Activated CD4-positive, alpha-beta T cell treated with anti-CD3 and anti-CD28 coated beads for 36 hours (primary cell): ENCODE measurements at regions of chr3 and their contacts with region 1.

Region 1: DNA sequence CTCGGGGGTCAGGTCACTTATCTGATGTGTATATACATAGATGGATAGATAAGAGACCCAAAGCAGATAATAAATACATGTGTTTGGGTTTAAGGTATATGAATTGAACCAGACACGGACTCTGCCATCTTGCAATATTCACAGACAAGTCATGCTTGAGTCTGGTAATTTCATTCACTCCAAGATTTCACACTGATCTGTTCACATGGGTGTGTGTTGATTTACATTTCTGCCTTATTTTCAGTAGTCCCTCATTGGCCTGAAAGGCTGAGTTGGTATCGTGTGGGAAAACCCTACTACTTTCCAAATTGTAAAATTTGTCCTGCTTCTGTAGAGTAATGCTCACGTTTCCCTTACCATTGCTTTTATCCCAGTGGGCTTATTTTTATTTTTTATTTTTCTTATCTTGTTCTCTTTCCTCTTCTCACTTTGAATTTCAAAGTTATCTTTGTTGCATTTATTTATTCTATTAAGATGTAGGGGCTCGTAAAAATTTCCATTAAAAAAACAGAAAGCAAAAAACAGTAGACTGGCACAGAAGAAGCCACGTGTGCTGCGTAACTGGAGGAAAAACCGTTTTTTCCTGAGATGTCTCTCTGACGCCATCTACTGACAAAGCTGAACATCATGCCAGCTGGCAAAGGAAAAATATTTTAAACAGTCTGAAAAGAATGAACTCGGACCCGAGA is 10.8 kb upstream of the MFSD1 start:
- DNase-seq: peak; percentile 48
- ATAC-seq: peak; percentile 74
- H3K4me3 Mint-ChIP-seq: peak overlapping the region; percentile 45
- H3K27ac Mint-ChIP-seq: peak overlapping the region; percentile 29
- H3K4me1 Mint-ChIP-seq: peaks cover 5% of the 10 kb centered on the region
- H3K27me3 Mint-ChIP-seq: no peaks in the 10 kb centered on the region

Region 2: GRCh38 chr3:157624801-157625200 is 1166.2 kb before region 1 on chr3:
- CTCF ChIA-PET with region 1: no interaction called
- POLR2A ChIA-PET with region 1: no interaction called
- intact Hi-C with region 1: loop called in 1 of 2 experiments (anchors 5 kb)
- DNase-seq: no peak
- ATAC-seq: no peak
- H3K4me3 Mint-ChIP-seq: no peak overlapping the region
- H3K27ac Mint-ChIP-seq: no peak overlapping the region
- H3K4me1 Mint-ChIP-seq: no peaks in the 10 kb centered on the region
- H3K27me3 Mint-ChIP-seq: peaks cover 14% of the 10 kb centered on the region

Region 3: GRCh38 chr3:158659454-158660237 is 131.4 kb before region 1 on chr3:
- CTCF ChIA-PET with region 1: interaction called, 28 read pairs
- POLR2A ChIA-PET with region 1: no interaction called
- intact Hi-C with region 1: loop called (anchors 1 kb)
- DNase-seq: peak; percentile 76
- ATAC-seq: peak; percentile 97
- H3K4me3 Mint-ChIP-seq: no peak overlapping the region
- H3K27ac Mint-ChIP-seq: no peak overlapping the region
- H3K4me1 Mint-ChIP-seq: peaks cover 11% of the 10 kb centered on the region
- H3K27me3 Mint-ChIP-seq: no peaks in the 10 kb centered on the region

Region 4: DNA sequence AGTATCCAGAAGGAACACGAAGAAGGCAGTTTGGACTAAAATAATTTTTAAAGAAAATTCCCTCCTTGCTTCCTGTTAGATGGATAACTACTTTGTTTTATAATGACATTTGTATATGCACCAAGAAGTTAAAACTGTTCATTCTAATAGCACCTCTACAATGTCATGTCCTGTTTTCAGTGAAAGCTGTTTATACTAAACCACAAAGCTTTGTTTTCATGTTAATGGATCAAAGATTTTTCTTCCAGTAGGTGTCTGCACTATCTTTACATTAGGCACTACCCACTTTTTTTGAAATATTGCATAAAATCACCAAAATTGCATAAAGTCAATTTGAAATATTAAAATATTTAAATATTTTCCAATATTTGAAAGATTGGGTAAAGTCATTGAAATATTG is 68.9 kb before region 1 on chr3:
- CTCF ChIA-PET with region 1: interaction called, 114 read pairs
- POLR2A ChIA-PET with region 1: no interaction called
- intact Hi-C with region 1: loop called (anchors 1 kb)
- DNase-seq: no peak
- ATAC-seq: no peak
- H3K4me3 Mint-ChIP-seq: no peak overlapping the region
- H3K27ac Mint-ChIP-seq: no peak overlapping the region
- H3K4me1 Mint-ChIP-seq: peaks cover 34% of the 10 kb centered on the region
- H3K27me3 Mint-ChIP-seq: no peaks in the 10 kb centered on the region

Region 5: GRCh38 chr3:158801696-158802408 is 10.8 kb after region 1 on chr3 and contains the start of gene MFSD1:
- CTCF ChIA-PET with region 1: interaction called, 13 read pairs
- POLR2A ChIA-PET with region 1: interaction called, 4 read pairs
- intact Hi-C with region 1: loop called in 1 of 2 experiments (anchors 1 kb)
- DNase-seq: peak; percentile 94
- ATAC-seq: peak; percentile 92
- H3K4me3 Mint-ChIP-seq: peak within 1 kb of the TSS; percentile 81
- H3K27ac Mint-ChIP-seq: peak within 1 kb of the TSS; percentile 87
- H3K4me1 Mint-ChIP-seq: peaks cover 22% of the 10 kb centered on the region
- H3K27me3 Mint-ChIP-seq: no peaks in the 10 kb centered on the region
- total RNA-seq, gene MFSD1: 6.9 to 13.1 TPM

Region 6: DNA sequence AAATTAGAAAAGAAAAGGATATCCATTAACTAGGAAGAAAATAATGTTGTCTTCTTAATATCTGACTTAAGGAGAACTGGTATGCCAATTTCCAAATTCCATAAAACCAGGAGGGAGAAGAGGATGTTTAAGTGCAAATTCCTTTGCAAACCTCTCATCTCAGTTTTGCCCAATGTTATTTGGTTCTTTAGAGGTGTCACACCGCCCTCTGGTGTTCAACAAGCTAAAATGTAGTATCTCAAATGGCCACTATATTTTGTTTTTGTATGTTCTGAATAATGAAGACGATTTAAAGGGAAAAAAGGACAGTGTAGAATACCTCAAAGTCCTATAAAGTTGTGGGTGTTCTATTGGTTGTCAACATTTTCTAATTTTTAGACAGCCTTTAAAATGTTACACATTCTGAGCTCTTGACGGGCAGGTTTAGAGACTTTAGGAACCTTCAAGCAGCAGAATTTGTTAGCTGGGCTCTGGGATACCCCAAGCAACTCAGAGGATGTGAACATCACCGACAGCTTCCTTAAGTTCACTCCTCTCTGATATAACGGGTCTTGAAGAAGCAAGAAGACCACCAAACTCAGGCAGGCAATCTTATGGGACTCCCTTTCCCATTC is 469.1 kb after region 1 on chr3:
- CTCF ChIA-PET with region 1: interaction called, 3 read pairs
- POLR2A ChIA-PET with region 1: no interaction called
- intact Hi-C with region 1: loop called in 1 of 2 experiments (anchors 1 kb)
- DNase-seq: peak; percentile 56
- ATAC-seq: no peak
- H3K4me3 Mint-ChIP-seq: no peak overlapping the region
- H3K27ac Mint-ChIP-seq: no peak overlapping the region
- H3K4me1 Mint-ChIP-seq: no peaks in the 10 kb centered on the region
- H3K27me3 Mint-ChIP-seq: peaks cover 3% of the 10 kb centered on the region

Region 7: GRCh38 chr3:159763602-159764489 is 972.8 kb after region 1 on chr3:
- CTCF ChIA-PET with region 1: no interaction called
- POLR2A ChIA-PET with region 1: no interaction called
- intact Hi-C with region 1: no loop called
- DNase-seq: peak; percentile 64
- ATAC-seq: peak; percentile 80
- H3K4me3 Mint-ChIP-seq: peak overlapping the region; percentile 61
- H3K27ac Mint-ChIP-seq: no peak overlapping the region
- H3K4me1 Mint-ChIP-seq: peaks cover 12% of the 10 kb centered on the region
- H3K27me3 Mint-ChIP-seq: peaks cover 52% of the 10 kb centered on the region